ENCODE measurements at regions of chr19 and their contacts with region 1.

Region 1: DNA sequence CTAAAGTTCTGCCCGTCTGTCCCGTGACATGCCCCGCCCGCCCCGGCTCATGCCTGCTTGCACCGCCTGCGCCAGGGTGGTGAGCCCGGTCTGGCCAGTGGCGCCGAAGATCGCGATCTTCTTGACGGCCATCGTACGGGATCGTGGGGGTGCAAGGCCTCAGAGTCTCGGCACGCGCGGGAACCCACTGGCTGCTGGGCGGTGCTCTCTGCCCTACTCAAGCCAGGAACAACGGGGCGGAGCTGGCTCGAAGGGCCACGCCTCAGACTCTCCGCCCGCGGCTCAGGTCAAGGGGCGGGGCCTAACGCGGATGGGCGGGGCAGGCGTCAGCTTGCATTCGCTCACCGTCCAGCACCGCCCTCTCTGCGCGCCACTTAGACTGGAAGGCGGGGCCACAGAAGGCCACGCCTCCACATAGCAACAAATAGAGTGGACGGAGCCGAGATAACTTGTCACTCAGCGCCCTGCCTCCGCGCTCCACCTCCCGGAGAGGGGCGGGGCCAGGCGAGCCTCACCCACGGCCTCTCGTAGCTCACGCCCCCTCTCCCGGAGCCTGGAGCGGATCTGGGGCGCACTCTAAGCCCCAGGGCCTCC is at the start of gene BLVRB:
- DNase-seq: peak; percentile 98 to 100
- ATAC-seq: peak; percentile 73 to 88
- H3K4me3 ChIP-seq: peak within 1 kb of the TSS; percentile 62
- H3K27ac ChIP-seq: peak within 1 kb of the TSS; percentile 86 to 89
- H3K4me1 ChIP-seq: peaks cover 38% of the 10 kb centered on the region
- CTCF ChIP-seq: no peak
- EP300 ChIP-seq: no peak
- POLR2A ChIP-seq: peak; percentile 95
- RAD21 ChIP-seq: no peak
- polyA plus RNA-seq, gene BLVRB: 202 and 241 TPM in 2 replicates

Region 2: GRCh38 chr19:40425450-40426287 is 40.0 kb before region 1 on chr19 and contains the start of gene SERTAD1:
- CTCF ChIA-PET with region 1: interaction called, 950 read pairs
- POLR2A ChIA-PET with region 1: interaction called, 68 read pairs
- DNase-seq: peak; percentile 100
- ATAC-seq: peak; percentile 78 to 85
- H3K4me3 ChIP-seq: peak within 1 kb of the TSS; percentile 66
- H3K27ac ChIP-seq: peak within 1 kb of the TSS; percentile 93 to 94
- H3K4me1 ChIP-seq: peaks cover 25% of the 10 kb centered on the region
- CTCF ChIP-seq: peak; percentile 100
- EP300 ChIP-seq: no peak; a peak in 1 of 5 replicates
- POLR2A ChIP-seq: peak; percentile 99
- RAD21 ChIP-seq: peak; percentile 11 to 73; a peak in 4 of 5 replicates
- polyA plus RNA-seq, gene SERTAD1: 10.0 and 10.7 TPM in 2 replicates

Region 3: GRCh38 chr19:40452016-40452415 is 13.6 kb before region 1 on chr19:
- CTCF ChIA-PET with region 1: interaction called, 132 read pairs
- POLR2A ChIA-PET with region 1: interaction called, 13 read pairs
- DNase-seq: no peak
- ATAC-seq: peak; percentile 58 to 60; a peak in 5 of 6 replicates
- H3K4me3 ChIP-seq: no peak overlapping the region
- H3K27ac ChIP-seq: no peak overlapping the region
- H3K4me1 ChIP-seq: no peaks in the 10 kb centered on the region
- CTCF ChIP-seq: no peak
- EP300 ChIP-seq: no peak
- POLR2A ChIP-seq: no peak
- RAD21 ChIP-seq: no peak

Region 4: GRCh38 chr19:40502647-40503319 is 37.1 kb after region 1 on chr19:
- CTCF ChIA-PET with region 1: interaction called, 19 read pairs
- POLR2A ChIA-PET with region 1: interaction called, 4 read pairs
- DNase-seq: peak; percentile 58 to 76
- ATAC-seq: peak; percentile 79 to 89
- H3K4me3 ChIP-seq: no peak overlapping the region
- H3K27ac ChIP-seq: no peak overlapping the region
- H3K4me1 ChIP-seq: no peaks in the 10 kb centered on the region
- CTCF ChIP-seq: 0 out of 3 replicates have a peak, but pooled peaks have one; percentile 31
- EP300 ChIP-seq: no peak
- POLR2A ChIP-seq: no peak
- RAD21 ChIP-seq: peak in 1 of 2 experiments; percentile 42; a peak in 2 of 5 replicates

Region 5: GRCh38 chr19:40529093-40529954 is 63.7 kb after region 1 on chr19:
- CTCF ChIA-PET with region 1: interaction called, 85 read pairs
- POLR2A ChIA-PET with region 1: interaction called, 10 read pairs
- DNase-seq: peak; percentile 94 to 100
- ATAC-seq: peak; percentile 37 to 78
- H3K4me3 ChIP-seq: peak overlapping the region; percentile 50
- H3K27ac ChIP-seq: peak overlapping the region; percentile 55 to 79
- H3K4me1 ChIP-seq: peaks cover 18% of the 10 kb centered on the region
- CTCF ChIP-seq: peak; percentile 99
- EP300 ChIP-seq: 0 out of 5 replicates have a peak, but pooled peaks of 1 of the 2 experiments have one; percentile 17
- POLR2A ChIP-seq: no peak
- RAD21 ChIP-seq: peak; percentile 43 to 72; a peak in 4 of 5 replicates

Region 6: GRCh38 chr19:40570313-40571004 is 104.8 kb after region 1 on chr19:
- CTCF ChIA-PET with region 1: interaction called, 20 read pairs
- POLR2A ChIA-PET with region 1: interaction called, 8 read pairs
- DNase-seq: peak; percentile 100
- ATAC-seq: peak; percentile 80 to 91
- H3K4me3 ChIP-seq: peak overlapping the region; percentile 56
- H3K27ac ChIP-seq: peak overlapping the region; percentile 84 to 89
- H3K4me1 ChIP-seq: peaks cover 17% of the 10 kb centered on the region
- CTCF ChIP-seq: peak; percentile 59
- EP300 ChIP-seq: no peak
- POLR2A ChIP-seq: peak; percentile 78
- RAD21 ChIP-seq: peak; percentile 55 to 59

Region 7: DNA sequence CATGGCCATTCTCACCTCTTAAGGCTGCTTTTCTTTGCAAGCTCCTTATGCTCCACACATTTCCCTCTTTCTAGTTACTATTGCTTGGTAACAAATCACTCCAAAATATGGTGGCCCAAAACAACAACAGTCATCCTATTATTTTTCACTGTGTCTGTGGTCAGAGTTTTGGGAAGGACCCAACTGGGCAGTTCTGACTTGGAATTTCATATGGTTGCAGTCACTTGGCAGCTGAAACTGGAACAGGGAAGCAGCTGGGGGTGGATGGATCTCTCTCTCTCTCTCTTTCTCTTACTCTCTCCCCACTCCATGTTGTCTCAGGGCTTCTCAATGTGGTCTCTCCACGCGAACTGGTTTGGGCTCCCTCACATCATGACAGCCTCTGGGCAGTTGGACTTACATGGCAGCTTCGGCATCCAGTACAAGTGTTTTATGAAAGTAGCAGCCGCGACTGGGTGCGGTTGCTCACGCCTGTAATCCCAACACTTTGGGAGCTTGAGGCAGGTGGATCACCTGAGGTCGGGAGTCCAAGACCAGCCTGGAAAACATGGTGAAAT is 185.2 kb after region 1 on chr19:
- CTCF ChIA-PET with region 1: interaction called, 12 read pairs
- POLR2A ChIA-PET with region 1: interaction called, 4 read pairs
- DNase-seq: no peak
- ATAC-seq: no peak
- H3K4me3 ChIP-seq: no peak overlapping the region
- H3K27ac ChIP-seq: no peak overlapping the region
- H3K4me1 ChIP-seq: peaks cover 11% of the 10 kb centered on the region
- CTCF ChIP-seq: no peak
- EP300 ChIP-seq: no peak
- POLR2A ChIP-seq: no peak
- RAD21 ChIP-seq: no peak

Region 8: GRCh38 chr19:41397086-41398049 is 931.7 kb after region 1 on chr19 and contains the starts of genes BCKDHA and EXOSC5:
- CTCF ChIA-PET with region 1: no interaction called
- POLR2A ChIA-PET with region 1: no interaction called
- DNase-seq: peak; percentile 100
- ATAC-seq: peak; percentile 92 to 95
- H3K4me3 ChIP-seq: peak within 1 kb of the TSS; percentile 70
- H3K27ac ChIP-seq: peak within 1 kb of the TSS; percentile 79 to 87
- H3K4me1 ChIP-seq: peaks cover 20% of the 10 kb centered on the region
- CTCF ChIP-seq: no peak
- EP300 ChIP-seq: no peak
- POLR2A ChIP-seq: peak; percentile 87
- RAD21 ChIP-seq: no peak; a peak in 2 of 5 replicates
- polyA plus RNA-seq, gene BCKDHA: 42.9 and 43.9 TPM in 2 replicates
- polyA plus RNA-seq, gene EXOSC5: 63.7 and 72.3 TPM in 2 replicates